GM23248 (cell line): ENCODE measurements at regions of chr19 and their contacts with region 1.

Region 1: DNA sequence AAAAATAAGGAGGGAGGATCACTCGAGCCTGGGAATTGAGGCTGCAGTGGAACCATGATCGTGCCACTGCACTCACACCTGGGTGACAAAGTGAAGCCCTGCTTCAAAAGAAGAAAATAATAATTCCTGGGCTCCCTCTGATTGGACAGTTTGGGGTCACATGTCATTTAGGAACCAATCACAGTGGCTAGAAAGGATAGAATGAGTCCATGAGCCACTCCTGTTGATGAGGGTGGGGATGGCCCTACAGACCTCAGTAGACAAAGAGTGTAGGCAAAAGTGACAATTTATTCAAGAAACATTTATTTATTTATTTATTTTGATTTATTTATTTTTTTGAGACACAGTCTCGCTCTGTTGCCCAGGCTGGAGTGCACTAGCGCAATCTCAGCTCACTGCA is 26.8 kb upstream of the ADGRE5 start:
- DNase-seq: no peak
- H3K4me3 ChIP-seq: no peak overlapping the region
- H3K27ac ChIP-seq: no peak overlapping the region
- H3K4me1 ChIP-seq: no peaks in the 10 kb centered on the region
- H3K27me3 ChIP-seq: 0 out of 2 replicates have a peak, but pooled peaks cover 13% of the 10 kb centered on the region

Region 2: DNA sequence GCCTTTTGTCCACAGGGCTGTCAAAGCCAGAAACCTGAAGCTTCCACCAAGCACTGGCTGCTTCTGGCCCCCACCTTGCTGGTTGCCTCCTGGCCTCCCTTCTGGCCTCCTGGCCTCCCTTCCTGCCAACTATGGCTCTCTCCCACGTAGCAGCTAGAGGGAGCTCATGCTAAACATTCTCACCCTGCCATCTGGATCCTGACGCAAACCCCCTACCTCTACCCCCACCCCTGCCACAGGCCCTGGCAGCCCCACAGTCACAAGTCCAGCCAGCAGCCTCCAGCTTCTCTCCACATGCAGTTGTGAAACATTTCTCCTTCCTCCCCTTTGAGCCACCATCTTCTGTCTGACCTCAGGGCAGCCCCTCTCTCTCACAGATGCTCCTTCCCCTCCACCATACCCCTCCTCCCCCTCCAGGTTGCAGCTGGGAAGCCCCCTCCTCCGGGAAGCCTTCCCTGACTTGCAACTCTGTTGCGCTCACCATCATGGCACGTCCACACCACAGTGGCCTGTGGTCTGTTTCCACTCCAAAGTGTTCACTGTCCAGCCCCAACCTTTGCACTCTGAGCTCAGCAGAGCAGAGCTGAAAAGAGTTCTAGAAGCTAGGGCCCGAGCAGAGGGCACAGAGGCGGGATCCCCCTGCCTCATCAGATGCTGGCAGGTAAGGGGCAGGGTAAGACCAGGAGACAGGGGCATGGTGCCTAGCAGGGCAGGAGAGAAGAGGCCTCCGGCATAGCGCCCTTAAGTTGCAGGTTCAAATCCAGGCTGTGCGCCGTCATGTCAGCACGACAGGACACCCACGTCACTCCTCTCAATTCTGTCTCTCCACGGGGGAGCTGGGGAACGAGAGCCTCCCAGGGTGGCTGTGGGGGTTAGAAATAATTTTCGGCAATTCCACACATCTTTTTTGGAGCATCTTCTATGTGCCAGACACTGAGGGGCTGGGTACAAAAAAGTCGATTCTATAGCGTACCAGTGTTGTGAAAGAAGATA is 155.8 kb before region 1 on chr19:
- in situ Hi-C with region 1: loop called (anchors 5 kb)
- DNase-seq: no peak
- H3K4me3 ChIP-seq: no peak overlapping the region
- H3K27ac ChIP-seq: no peak overlapping the region
- H3K4me1 ChIP-seq: no peaks in the 10 kb centered on the region
- H3K27me3 ChIP-seq: no peaks in the 10 kb centered on the region

Region 3: GRCh38 chr19:14248578-14249011 is 105.8 kb before region 1 on chr19:
- in situ Hi-C with region 1: no loop called
- DNase-seq: peak; percentile 41
- H3K4me3 ChIP-seq: peak overlapping the region; percentile 74
- H3K27ac ChIP-seq: no peak overlapping the region
- H3K4me1 ChIP-seq: no peaks in the 10 kb centered on the region
- H3K27me3 ChIP-seq: peaks cover 8% of the 10 kb centered on the region; the same call in 1 of the 2 replicates

Region 4: GRCh38 chr19:14300303-14300702 is 54.1 kb before region 1 on chr19:
- in situ Hi-C with region 1: no loop called
- DNase-seq: no peak
- H3K4me3 ChIP-seq: no peak overlapping the region
- H3K27ac ChIP-seq: no peak overlapping the region
- H3K4me1 ChIP-seq: no peaks in the 10 kb centered on the region
- H3K27me3 ChIP-seq: peaks cover 10% of the 10 kb centered on the region